Astrocyte of the cerebellum (primary cell): ENCODE measurements at regions of chr2 and their contacts with region 1.

Region 1: DNA sequence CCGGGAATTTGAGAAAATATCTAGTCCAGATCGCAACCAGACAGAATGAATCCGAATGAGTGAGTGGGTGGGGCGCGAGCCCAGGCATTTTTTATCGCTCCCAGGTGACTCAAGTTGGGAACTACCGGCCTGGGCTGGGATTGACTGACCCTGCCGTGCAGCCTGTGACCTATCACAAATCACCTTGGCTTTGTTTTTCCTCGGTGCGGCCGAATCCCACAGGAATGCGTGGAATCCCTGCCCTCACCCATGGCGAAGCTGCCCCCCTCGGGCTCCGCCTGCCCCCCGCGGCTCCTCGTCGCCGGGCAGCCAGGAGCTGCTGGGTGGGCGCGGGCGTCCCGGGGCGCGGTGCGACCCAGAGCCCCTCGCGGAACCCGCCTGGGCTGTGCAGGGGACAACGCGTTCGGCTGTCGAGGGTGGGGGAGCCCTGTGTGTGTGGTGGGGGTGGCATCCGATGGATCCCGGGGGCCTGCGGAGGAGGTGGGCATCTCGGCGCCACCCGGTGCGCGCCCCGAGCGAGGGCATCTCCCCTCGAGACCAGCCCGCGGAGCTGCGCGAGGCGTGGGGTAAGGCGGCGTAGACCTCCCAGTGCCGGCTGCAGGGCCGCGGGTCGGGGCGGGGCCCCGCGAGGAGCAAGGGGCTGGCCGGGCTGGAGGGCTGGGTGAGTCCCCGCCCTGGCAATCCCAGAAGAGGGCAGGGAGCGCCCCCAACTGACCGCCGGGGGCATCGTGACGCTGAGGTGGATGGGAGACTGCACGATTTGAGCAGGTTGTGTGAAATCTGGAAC is 16.5 kb downstream of the B3GNT7 start:
- DNase-seq: peak; percentile 41
- H3K4me3 ChIP-seq: peak overlapping the region; percentile 55
- CTCF ChIP-seq: peak; percentile 91

Region 2: GRCh38 chr2:231104115-231104713 is 307.8 kb before region 1 on chr2:
- in situ Hi-C with region 1: loop called (anchors 10 kb)
- DNase-seq: peak; percentile 63
- H3K4me3 ChIP-seq: no peak overlapping the region
- CTCF ChIP-seq: peak; percentile 90

Region 3: GRCh38 chr2:231321556-231322334 is 90.3 kb before region 1 on chr2:
- in situ Hi-C with region 1: loop called (anchors 5 kb)
- DNase-seq: no peak
- H3K4me3 ChIP-seq: no peak overlapping the region
- CTCF ChIP-seq: no peak

Region 4: GRCh38 chr2:231342061-231342711 is 69.8 kb before region 1 on chr2:
- in situ Hi-C with region 1: no loop called
- DNase-seq: no peak
- H3K4me3 ChIP-seq: no peak overlapping the region
- CTCF ChIP-seq: no peak